Heart right ventricle (tissue), 16 donors: ENCODE measurements at regions of chrX and their contacts with region 1.

Region 1: DNA sequence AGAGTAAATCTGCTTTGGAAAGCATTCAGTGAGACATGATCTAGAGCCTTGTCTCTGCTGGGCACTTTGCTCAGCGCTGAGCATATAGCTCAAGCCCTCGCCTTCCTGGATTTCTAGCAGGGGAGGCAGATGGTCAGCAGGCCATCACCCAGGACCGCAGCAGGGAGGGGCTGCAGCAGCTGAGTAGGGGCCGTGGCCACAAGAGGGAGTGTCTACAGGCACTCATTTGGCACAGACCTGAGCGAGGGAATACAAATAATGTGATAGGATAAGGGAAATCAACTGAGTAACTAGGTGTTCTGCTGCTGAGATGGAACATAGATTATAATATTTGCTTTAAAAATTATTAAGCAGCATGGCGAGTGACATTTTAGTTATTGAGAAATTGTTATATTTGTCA is 30.2 kb downstream of the OFD1 start:
- DNase-seq: no peak
- ATAC-seq: peak in 6 of 8 donors; percentile 54 to 73 (median 60)
- H3K4me3 ChIP-seq: no peak overlapping the region
- H3K27ac ChIP-seq: peak overlapping the region; percentile 14 to 77 (median 48)
- H3K4me1 ChIP-seq: peaks cover 0 to 40% (median 23%) of the 10 kb centered on the region in 9 donors
- H3K27me3 ChIP-seq: no peaks in the 10 kb centered on the region
- CTCF ChIP-seq: peak in 8 of 9 donors; percentile 6 to 44 (median 30)

Region 2: GRCh38 chrX:13653022-13653693 is 111.6 kb before region 1 on chrX and contains the start of gene TCEANC:
- intact Hi-C with region 1: loop called in 1 of 10 experiments (anchors 5 kb)
- DNase-seq: peak; percentile 93 to 94
- ATAC-seq: peak; percentile 99 to 100 (median 100)
- H3K4me3 ChIP-seq: peak within 1 kb of the TSS; percentile 43 to 73 (median 66)
- H3K27ac ChIP-seq: peak within 1 kb of the TSS; percentile 87 to 96 (median 94)
- H3K4me1 ChIP-seq: peaks cover 0 to 26% (median 12%) of the 10 kb centered on the region in 9 donors
- H3K27me3 ChIP-seq: peaks cover 0 to 35% (median 0%) of the 10 kb centered on the region in 7 donors
- CTCF ChIP-seq: no peak
- total RNA-seq, gene TCEANC: 3.3 to 7.2 (median 4.6) TPM

Region 3: GRCh38 chrX:13685126-13685763 is 79.5 kb before region 1 on chrX:
- intact Hi-C with region 1: no loop called
- DNase-seq: no peak
- ATAC-seq: no peak
- H3K4me3 ChIP-seq: no peak overlapping the region
- H3K27ac ChIP-seq: no peak overlapping the region
- H3K4me1 ChIP-seq: peaks cover 0 to 11% (median 0%) of the 10 kb centered on the region in 9 donors
- H3K27me3 ChIP-seq: peaks cover 0 to 38% (median 0%) of the 10 kb centered on the region in 7 donors
- CTCF ChIP-seq: no peak